ENCODE measurements at regions of chr1 and their contacts with region 1.

Region 1: DNA sequence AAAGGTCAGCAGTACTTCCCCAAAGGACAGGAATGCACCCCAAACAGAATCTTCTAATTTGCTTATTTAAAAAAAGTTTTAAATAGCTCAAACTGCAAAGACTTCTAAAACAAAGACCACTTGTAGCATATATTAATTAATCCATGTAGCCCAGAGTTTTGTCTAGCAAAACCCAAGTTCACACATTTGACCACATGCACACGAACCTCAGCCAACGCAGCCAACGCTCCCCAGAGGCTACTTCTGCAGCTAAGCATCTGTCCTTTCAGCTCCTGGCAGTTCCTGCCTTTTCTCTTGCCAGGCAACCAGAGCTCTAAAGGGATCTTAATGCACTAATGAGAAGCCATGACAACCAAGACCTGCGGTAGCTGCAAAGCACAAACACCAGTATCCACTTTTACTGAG is 89.6 kb downstream of the RERE start:
- DNase-seq: no peak
- H3K4me3 ChIP-seq: no peak overlapping the region
- H3K27ac ChIP-seq: no peak overlapping the region
- H3K4me1 ChIP-seq: no peaks in the 10 kb centered on the region
- H3K27me3 ChIP-seq: no peaks in the 10 kb centered on the region
- CTCF ChIP-seq: no peak
- POLR2A ChIP-seq: no peak

Region 2: DNA sequence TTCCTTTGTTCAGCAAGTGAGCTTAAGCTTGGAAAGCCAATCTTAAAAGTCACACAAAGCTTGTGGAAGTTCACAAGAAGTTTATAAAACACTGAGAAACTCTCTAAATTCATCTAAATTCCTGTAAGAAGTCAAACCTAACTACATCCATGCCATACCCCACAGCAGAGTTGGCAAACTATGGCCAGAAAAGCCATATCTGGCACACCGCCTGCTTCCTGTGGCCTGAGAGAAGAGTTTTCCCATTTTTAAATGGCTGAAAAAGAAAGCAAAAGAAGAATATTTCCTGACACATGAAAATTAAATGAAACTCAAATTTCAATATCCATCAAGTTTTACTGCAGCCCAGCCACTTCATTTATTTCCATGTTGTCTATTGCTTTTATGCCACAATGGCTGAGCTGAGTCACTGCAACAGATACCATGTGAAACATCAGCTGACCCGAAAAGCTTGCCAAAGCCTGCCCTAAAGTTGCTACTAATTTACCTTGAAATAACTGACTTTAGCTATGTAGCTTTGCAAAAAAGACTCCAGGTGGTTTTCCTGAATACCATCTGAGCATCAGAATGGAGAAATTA is 172.8 kb before region 1 on chr1:
- intact Hi-C with region 1: loop called (anchors 5 kb)
- DNase-seq: no peak
- H3K4me3 ChIP-seq: no peak overlapping the region
- H3K27ac ChIP-seq: no peak overlapping the region
- H3K4me1 ChIP-seq: no peaks in the 10 kb centered on the region
- H3K27me3 ChIP-seq: no peaks in the 10 kb centered on the region
- CTCF ChIP-seq: no peak
- POLR2A ChIP-seq: no peak